Ascending aorta (tissue), 2 donors: ENCODE measurements at regions of chr7 and their contacts with region 1.

Region 1: GRCh38 chr7:32891800-32892520 is 400 bp upstream of the KBTBD2 start:
- DNase-seq: peak; percentile 83 to 97
- H3K4me3 ChIP-seq: peak overlapping the region; percentile 96 to 100
- H3K27ac ChIP-seq: peak overlapping the region; percentile 98 to 100
- H3K4me1 ChIP-seq: peaks cover 2 to 26% of the 10 kb centered on the region in 2 donors
- H3K27me3 ChIP-seq: no peaks in the 10 kb centered on the region
- CTCF ChIP-seq: no peak

Region 2: GRCh38 chr7:31724696-31725095 is 1167.3 kb before region 1 on chr7:
- intact Hi-C with region 1: no loop called
- DNase-seq: no peak
- H3K4me3 ChIP-seq: no peak overlapping the region
- H3K27ac ChIP-seq: no peak overlapping the region
- H3K4me1 ChIP-seq: no peaks in the 10 kb centered on the region
- H3K27me3 ChIP-seq: no peaks in the 10 kb centered on the region
- CTCF ChIP-seq: no peak

Region 3: DNA sequence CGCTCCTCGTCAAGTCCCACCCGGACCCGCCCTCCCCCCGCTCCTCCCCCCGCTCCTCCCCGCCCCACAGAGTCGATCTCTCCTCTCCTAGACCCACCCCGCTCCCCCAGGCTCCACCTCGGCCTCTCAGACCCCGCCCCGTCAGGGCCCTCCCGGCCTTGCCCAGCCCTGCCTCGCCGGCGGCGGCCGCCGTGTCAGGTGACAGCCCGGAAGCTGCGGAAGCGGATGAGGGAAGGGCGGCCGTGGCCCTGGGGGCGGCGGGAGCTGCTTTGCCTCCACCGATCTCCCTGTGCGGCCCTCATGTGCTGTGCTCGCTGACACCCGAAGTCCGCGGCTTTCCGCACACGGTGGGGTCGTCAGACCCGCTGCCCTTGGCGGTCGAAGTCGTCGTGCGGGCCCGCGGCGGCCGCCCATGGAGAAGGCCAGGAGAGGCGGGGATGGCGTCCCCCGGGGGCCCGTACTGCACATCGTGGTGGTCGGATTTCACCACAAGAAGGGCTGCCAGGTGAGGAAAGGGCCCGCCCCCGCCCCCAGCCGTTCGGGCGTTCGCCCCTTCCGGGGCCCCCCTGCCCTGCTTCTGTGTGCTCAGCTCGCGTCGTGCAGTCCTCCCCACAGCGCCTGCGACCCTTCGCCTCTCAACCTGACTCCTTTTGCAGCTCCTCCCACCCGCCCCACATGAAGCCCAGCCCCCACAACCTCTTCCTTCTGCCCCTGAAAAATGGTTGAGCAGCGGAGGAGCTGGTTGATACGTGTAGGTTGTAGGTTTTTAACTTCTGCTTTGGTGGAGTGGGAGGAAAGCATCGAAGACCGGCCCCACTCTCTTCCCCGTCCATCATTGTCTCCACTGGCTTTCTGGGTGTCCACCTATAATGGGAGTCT is 396.4 kb before region 1 on chr7 and contains the start of gene AVL9:
- intact Hi-C with region 1: loop called (anchors 2 kb)
- DNase-seq: peak; percentile 96 to 99
- H3K4me3 ChIP-seq: peak within 1 kb of the TSS; percentile 82 to 97
- H3K27ac ChIP-seq: peak within 1 kb of the TSS; percentile 98 to 99
- H3K4me1 ChIP-seq: peaks cover 7 to 13% of the 10 kb centered on the region in 2 donors
- H3K27me3 ChIP-seq: no peaks in the 10 kb centered on the region
- CTCF ChIP-seq: no peak
- total RNA-seq, gene AVL9: 78.3 TPM

Region 4: GRCh38 chr7:32942786-32943653 is 51.1 kb after region 1 on chr7:
- intact Hi-C with region 1: loop called (anchors 1 kb)
- DNase-seq: peak; percentile 45 to 89
- H3K4me3 ChIP-seq: peak overlapping the region; percentile 92 to 100
- H3K27ac ChIP-seq: peak overlapping the region; percentile 88 to 98
- H3K4me1 ChIP-seq: peaks cover 3 to 10% of the 10 kb centered on the region in 2 donors
- H3K27me3 ChIP-seq: no peaks in the 10 kb centered on the region
- CTCF ChIP-seq: peak; percentile 38 to 75 (median 64)

Region 5: DNA sequence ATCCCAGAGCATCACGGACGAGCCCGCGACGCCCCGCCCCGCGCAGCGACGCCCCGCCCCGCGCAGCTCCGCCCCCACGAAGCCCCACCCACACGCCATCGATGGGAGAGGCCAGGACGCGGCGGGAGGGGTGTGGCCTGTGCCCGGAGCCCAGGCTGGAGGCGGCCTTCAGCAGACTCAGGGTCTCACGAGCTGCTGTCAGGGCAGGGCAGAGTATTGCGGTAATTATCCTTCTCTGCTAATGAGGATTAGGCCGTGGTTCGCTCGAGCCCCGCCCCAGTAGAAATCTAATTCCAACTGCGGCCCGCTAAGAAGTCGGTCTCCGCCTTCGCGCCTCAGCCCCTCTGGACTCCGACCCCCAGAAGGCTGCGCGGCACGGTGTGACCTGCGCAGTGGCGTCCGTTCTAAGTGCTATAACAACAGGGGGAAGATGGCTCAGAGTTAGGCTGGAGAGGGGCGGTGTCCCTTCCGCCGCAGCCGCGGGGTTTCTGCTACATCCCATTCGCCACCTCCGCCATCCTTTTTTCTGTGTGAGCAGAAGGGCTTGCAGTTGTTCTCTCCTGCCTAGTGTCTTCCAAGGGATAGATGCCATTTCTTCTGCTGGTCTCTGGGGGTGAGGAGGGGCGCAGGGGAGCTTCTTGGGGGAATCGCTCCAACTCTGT is 171.0 kb after region 1 on chr7:
- intact Hi-C with region 1: loop called (anchors 1 kb)
- DNase-seq: peak; percentile 81 to 94
- H3K4me3 ChIP-seq: peak overlapping the region; percentile 67 to 86
- H3K27ac ChIP-seq: peak overlapping the region; percentile 87 to 94
- H3K4me1 ChIP-seq: peaks cover 3 to 18% of the 10 kb centered on the region in 2 donors
- H3K27me3 ChIP-seq: no peaks in the 10 kb centered on the region
- CTCF ChIP-seq: no peak

Region 6: DNA sequence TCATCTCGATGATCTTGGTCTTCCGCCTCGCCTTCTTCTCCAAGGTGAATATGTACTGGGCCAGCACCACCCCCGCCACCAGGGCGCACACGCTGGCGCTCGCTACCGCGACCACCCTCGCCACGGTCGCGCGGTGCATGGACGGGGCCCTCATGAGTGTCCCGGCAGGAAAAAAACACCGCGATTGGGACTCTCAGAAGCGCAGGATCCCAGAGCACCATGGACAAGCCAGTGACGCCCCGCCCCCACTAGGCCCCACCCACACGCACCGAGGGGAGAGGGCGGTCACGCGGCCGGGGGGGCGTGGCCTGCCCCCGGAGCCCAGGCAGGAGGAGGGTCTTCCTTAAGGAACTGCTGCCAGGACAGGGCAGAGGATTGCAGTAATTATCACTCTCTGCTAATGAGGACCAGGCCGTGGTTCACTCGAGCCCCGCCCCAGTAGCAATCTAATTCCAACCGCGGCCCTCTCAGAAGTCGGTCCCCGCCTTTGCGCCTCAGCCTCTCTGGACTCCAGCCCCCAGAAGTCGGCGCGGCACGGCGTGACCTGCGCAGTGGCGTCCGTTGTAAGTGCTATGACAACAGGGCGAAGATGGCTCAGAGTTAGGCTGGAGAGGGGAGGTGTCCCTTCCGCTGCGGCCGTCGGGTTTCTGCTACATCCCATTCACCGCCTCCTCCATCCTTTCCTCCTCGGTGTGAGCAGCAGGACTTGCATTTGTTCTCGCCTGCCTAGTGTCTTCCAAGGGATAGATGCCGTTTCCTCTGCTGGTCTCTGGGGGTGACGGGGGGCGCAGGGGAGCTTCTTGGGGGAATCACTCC is 237.2 kb after region 1 on chr7 and contains the start of gene BBS9:
- intact Hi-C with region 1: loop called (anchors 1 kb)
- DNase-seq: peak; percentile 73 to 96
- H3K4me3 ChIP-seq: peak within 1 kb of the TSS; percentile 84 to 96
- H3K27ac ChIP-seq: peak within 1 kb of the TSS; percentile 30 to 77
- H3K4me1 ChIP-seq: peaks cover 0 to 8% of the 10 kb centered on the region in 2 donors
- H3K27me3 ChIP-seq: no peaks in the 10 kb centered on the region
- CTCF ChIP-seq: no peak
- total RNA-seq, gene BBS9: 23.3 TPM